SK-N-SH (cell line): ENCODE measurements at regions of chr3 and their contacts with region 1.

Region 1: GRCh38 chr3:184336547-184337398 is 627 bp upstream of the FAM131A start:
- DNase-seq: peak; percentile 67
- H3K4me3 ChIP-seq: peak overlapping the region; percentile 72 to 74
- H3K27ac ChIP-seq: peak overlapping the region; percentile 90 to 92
- H3K4me1 ChIP-seq: peaks cover 37 to 49% of the 10 kb centered on the region in 2 experiments; a peak in 3 of 4 replicates
- H3K27me3 ChIP-seq: no peaks in the 10 kb centered on the region
- CTCF ChIP-seq: no peak
- EP300 ChIP-seq: no peak
- RAD21 ChIP-seq: no peak

Region 2: DNA sequence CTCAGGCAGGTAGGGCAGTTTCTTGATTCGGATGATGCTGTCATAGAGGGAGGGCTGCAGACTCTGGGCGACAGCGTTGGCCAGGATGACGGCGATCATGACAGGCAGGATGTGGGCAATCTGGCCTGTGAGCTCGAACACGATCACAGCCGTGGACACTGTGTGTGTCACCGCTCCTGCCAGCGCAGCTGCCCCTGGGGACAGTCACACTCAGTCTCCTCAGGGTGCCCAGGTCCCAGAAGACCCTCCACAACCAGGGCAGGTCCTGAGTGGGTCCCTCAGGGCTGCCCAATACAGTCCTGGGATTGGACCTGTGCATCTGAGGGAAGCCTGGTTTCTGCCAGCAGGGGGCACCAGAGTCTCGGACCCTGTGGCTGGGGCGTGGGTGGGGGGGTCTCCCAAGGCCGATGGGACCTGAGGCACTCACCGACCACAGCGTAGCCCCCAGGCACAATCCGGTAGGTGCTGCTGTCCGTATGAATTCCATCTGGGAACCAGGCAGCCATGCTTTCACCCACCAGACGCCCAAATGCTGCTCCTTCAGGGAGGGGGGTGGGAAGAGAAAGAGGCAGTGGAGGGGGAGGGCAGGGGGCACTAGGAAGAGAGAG is 17.5 kb after region 1 on chr3:
- CTCF ChIA-PET with region 1: interaction called, 63 read pairs
- POLR2A ChIA-PET with region 1: interaction called, 19 read pairs
- DNase-seq: peak; percentile 92
- H3K4me3 ChIP-seq: peak overlapping the region in 1 of 2 experiments; percentile 39; a peak in 1 of 4 replicates
- H3K27ac ChIP-seq: no peak overlapping the region; a peak in 1 of 4 replicates
- H3K4me1 ChIP-seq: peaks cover 0 to 18% of the 10 kb centered on the region in 2 experiments; a peak in 1 of 4 replicates
- H3K27me3 ChIP-seq: no peaks in the 10 kb centered on the region
- CTCF ChIP-seq: peak; percentile 72
- EP300 ChIP-seq: no peak
- RAD21 ChIP-seq: peak; percentile 52

Region 3: GRCh38 chr3:184362668-184363540 is 26.1 kb after region 1 on chr3:
- CTCF ChIA-PET with region 1: interaction called, 4 read pairs
- POLR2A ChIA-PET with region 1: interaction called, 14 read pairs
- DNase-seq: peak; percentile 94
- H3K4me3 ChIP-seq: peak overlapping the region; percentile 91 to 96
- H3K27ac ChIP-seq: peak overlapping the region; percentile 97 to 99
- H3K4me1 ChIP-seq: peaks cover 12 to 19% of the 10 kb centered on the region in 2 experiments; a peak in 3 of 4 replicates
- H3K27me3 ChIP-seq: no peaks in the 10 kb centered on the region
- CTCF ChIP-seq: peak; percentile 57
- EP300 ChIP-seq: 0 out of 4 replicates have a peak, but pooled peaks of 1 of the 2 experiments have one; percentile 3
- RAD21 ChIP-seq: no peak; the same call in 1 of the 2 replicates